ENCODE measurements at regions of chr1 and their contacts with region 1.

Region 1: DNA sequence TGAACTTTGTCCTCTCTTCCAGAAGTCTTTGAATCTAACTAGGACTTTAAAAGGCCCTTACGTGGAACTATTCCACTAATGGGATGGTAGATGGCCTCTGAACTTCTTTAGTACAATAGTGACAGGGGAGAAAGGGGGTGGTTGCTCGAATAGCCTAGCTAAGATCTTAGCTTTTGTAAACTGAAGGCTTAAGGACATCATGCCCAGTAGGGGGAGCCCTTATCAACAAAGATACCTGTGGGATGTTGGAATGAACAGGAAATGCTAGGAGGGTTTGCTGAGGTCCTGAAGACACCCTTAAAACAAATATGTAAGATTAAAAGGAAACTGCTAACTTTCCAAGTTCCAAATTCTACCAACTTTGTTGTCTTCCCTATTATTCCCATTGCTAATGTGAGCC is 33.2 kb downstream of the NHLH2 start:
- DNase-seq: no peak
- ATAC-seq: peak; percentile 65

Region 2: DNA sequence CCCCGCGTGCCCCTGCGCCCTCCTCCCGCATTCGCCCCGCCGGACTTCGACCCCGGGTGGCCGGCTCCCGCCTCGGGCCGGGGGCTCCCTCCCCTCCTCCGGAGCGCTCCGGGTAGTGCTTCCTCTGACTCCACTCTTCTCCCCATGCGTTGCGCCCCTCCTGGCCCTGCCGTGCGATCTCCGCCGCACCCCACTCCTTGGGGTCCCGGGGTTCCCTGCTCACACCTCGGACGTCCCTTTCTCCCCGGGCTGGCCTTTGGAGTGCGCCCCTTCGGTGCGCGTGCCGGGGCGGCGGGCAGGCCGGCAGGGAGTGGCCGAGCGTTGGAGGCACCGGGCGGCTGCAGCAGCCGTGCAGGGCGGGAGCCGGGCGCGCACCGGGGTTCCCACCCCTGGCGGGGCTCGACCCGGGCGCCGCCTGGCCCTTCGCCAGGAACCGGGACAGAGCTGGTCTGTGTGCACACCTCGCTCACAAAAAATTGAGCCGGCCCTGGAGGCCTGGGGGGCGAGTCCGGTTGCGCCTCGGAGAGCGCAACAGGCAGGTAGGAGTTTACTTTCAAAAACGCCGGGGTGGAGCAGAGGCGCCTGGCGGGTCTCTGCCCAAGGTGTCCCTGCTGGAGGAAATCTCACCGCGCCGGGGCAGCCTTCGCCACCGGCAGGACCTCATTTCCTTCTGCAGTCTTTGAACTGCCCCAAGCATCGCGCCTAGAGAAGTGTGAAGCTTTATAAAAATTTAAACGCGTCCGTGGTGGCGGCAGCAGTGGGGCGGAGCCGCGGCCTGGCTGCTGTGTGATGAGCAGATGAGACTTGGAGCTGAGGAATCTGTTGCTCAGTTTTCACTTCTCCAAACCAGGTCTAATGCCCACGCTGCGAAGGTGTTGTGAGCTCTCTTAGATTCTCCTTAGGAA is 165.3 kb before region 1 on chr1:
- intact Hi-C with region 1: no loop called
- DNase-seq: no peak
- ATAC-seq: peak; percentile 65

Region 3: GRCh38 chr1:115980998-115981993 is 173.6 kb after region 1 on chr1:
- intact Hi-C with region 1: loop called (anchors 5 kb)
- DNase-seq: no peak
- ATAC-seq: peak; percentile 38

Region 4: DNA sequence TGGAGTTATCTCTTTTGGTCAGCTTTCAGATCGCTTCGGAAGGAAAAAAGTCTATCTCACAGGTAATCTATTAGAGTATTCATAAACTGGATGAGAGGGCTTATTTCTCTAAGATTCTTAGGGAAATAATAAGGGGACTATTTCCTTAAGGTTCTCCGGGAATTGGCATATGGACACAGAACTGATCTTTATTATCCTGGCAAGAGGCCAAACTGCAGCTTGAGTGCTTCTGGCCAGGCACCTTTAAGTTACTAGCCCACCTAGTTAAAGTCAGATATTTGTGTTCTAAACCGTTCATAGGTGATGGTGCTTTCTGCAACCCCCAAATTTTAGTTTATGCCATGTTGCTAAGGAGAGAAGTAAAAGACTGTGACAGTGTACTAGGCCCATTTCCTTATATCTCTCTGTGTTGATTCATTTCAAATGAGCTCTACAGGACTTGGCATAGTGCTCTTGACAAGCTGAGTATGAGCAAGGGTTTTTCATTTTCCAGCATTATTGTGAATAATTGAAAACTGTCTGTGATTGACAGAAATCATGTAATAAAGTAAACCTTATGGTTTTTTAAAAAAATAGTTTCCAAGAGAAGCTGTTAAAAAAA is 212.0 kb after region 1 on chr1:
- intact Hi-C with region 1: loop called (anchors 2 kb)
- DNase-seq: no peak
- ATAC-seq: no peak

Region 5: GRCh38 chr1:116122955-116123757 is 315.4 kb after region 1 on chr1:
- intact Hi-C with region 1: loop called (anchors 10 kb)
- DNase-seq: no peak
- ATAC-seq: no peak

Region 6: DNA sequence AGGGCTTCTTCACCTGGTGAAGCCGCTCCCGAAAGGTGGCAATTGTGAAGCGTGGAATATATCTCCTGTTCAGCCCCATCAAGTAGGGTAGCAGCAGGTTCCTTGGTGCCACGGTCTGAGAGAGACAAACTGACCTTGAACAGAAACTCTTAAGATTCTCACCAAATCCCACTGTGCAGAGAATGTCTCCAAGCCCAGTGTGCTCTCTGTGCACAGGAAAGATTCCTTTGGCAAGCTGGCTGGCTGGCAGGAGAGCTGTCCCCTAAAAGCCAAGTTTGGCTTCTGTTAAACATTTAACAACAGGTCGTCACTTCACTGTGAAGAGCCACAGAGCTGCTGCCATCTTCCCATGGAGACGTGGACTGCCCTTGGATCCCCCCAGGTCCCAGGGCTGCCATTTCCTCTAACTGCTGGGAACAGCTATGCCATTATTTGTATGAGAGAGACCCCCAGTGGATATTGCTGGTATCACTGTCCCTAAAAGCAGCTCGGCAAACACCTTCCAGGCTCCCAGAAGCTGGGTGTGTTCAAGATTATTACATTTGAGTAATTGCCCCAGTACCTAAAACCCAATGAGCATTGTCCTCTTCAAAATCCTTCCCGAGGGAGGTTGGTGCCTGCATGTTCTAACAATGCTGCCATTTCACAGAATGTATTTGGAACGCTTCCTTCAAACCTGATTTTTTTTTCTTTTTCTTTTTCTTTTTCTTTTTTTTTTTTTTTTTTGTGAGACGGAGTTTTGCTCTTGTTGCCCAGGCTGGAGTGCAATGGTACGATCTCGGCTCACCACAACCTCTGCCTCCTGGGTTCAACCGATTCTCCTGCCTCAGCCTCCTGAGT is 691.3 kb after region 1 on chr1:
- intact Hi-C with region 1: loop called (anchors 5 kb)
- DNase-seq: peak; percentile 76
- ATAC-seq: peak; percentile 76

Measured in Right ventricle myocardium inferior (tissue), 1 donor.